Caco-2 (cell line): ENCODE measurements at regions of chr3 and their contacts with region 1.

Region 1: GRCh38 chr3:40719660-40720287 is 195.0 kb downstream of the ZNF621 start:
- DNase-seq: peak in 1 of 2 experiments; percentile 25
- H3K4me3 ChIP-seq: no peak overlapping the region
- H3K4me3 Mint-ChIP-seq: no peak overlapping the region
- H3K27ac Mint-ChIP-seq: no peak overlapping the region
- H3K4me1 ChIP-seq: peaks cover 8% of the 10 kb centered on the region; the same call in 1 of the 2 replicates
- H3K4me1 Mint-ChIP-seq: peaks cover 9% of the 10 kb centered on the region
- H3K27me3 ChIP-seq: no peaks in the 10 kb centered on the region
- H3K27me3 Mint-ChIP-seq: peaks cover 5% of the 10 kb centered on the region
- CTCF ChIP-seq: peak; percentile 21 to 37

Region 2: GRCh38 chr3:40580494-40581091 is 139.2 kb before region 1 on chr3:
- CTCF ChIA-PET with region 1: no interaction called
- POLR2A ChIA-PET with region 1: no interaction called
- intact Hi-C with region 1: loop called (anchors 10 kb)
- DNase-seq: peak; percentile 63 to 74
- H3K4me3 ChIP-seq: no peak overlapping the region
- H3K4me3 Mint-ChIP-seq: no peak overlapping the region
- H3K27ac Mint-ChIP-seq: no peak overlapping the region
- H3K4me1 ChIP-seq: no peaks in the 10 kb centered on the region
- H3K4me1 Mint-ChIP-seq: no peaks in the 10 kb centered on the region
- H3K27me3 ChIP-seq: no peaks in the 10 kb centered on the region
- H3K27me3 Mint-ChIP-seq: peaks cover 3% of the 10 kb centered on the region
- CTCF ChIP-seq: peak; percentile 91 to 94

Region 3: DNA sequence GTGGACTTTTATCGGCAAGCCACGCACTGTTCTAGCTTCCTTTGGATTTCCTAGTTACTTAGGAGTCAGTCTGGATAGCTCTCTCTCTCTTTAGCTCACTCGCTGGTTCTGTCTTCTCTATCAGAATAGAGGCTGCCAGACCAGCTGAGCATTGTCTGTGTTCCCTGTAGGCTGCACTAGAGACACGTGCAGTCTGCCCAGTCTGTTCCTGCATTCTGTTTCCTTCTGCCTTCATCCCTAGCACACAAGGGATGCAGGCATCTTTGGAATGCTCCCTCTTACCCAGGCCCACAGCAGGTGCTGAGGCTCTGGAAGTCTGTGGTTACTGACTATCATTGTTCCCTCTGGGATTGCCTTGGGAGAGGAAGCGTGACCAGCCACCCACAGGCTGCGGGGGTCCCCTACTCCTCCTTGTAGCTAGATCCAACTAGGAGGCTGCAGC is 127.8 kb after region 1 on chr3:
- CTCF ChIA-PET with region 1: no interaction called
- POLR2A ChIA-PET with region 1: no interaction called
- intact Hi-C with region 1: loop called (anchors 1 kb)
- DNase-seq: peak; percentile 40 to 54
- H3K4me3 ChIP-seq: no peak overlapping the region
- H3K4me3 Mint-ChIP-seq: no peak overlapping the region
- H3K27ac Mint-ChIP-seq: no peak overlapping the region
- H3K4me1 ChIP-seq: 0 out of 2 replicates have a peak, but pooled peaks cover 7% of the 10 kb centered on the region
- H3K4me1 Mint-ChIP-seq: peaks cover 13% of the 10 kb centered on the region
- H3K27me3 ChIP-seq: no peaks in the 10 kb centered on the region
- H3K27me3 Mint-ChIP-seq: no peaks in the 10 kb centered on the region
- CTCF ChIP-seq: peak in 1 of 2 experiments; percentile 28